ENCODE measurements at regions of chr7 and their contacts with region 1.

Region 1: GRCh38 chr7:37435156-37435855 is 13.4 kb downstream of the ELMO1 start:
- DNase-seq: no peak
- H3K4me3 Mint-ChIP-seq: no peak overlapping the region
- H3K27ac Mint-ChIP-seq: no peak overlapping the region
- H3K4me1 Mint-ChIP-seq: peaks cover 71% of the 10 kb centered on the region
- H3K27me3 Mint-ChIP-seq: no peaks in the 10 kb centered on the region

Region 2: GRCh38 chr7:37448636-37449361 is 13.5 kb after region 1 on chr7 and contains the start of gene ELMO1:
- CTCF ChIA-PET with region 1: interaction called, 13 read pairs
- POLR2A ChIA-PET with region 1: no interaction called
- DNase-seq: peak; percentile 86
- H3K4me3 Mint-ChIP-seq: peak within 1 kb of the TSS; percentile 91
- H3K27ac Mint-ChIP-seq: peak within 1 kb of the TSS; percentile 97
- H3K4me1 Mint-ChIP-seq: peaks cover 60% of the 10 kb centered on the region
- H3K27me3 Mint-ChIP-seq: peaks cover 2% of the 10 kb centered on the region
- total RNA-seq, gene ELMO1: 99.8 to 142 TPM

Region 3: GRCh38 chr7:37467002-37467401 is 31.7 kb after region 1 on chr7:
- CTCF ChIA-PET with region 1: no interaction called
- POLR2A ChIA-PET with region 1: no interaction called
- DNase-seq: no peak
- H3K4me3 Mint-ChIP-seq: no peak overlapping the region
- H3K27ac Mint-ChIP-seq: no peak overlapping the region
- H3K4me1 Mint-ChIP-seq: no peaks in the 10 kb centered on the region
- H3K27me3 Mint-ChIP-seq: peaks cover 6% of the 10 kb centered on the region

Measured in activated CD4-positive, alpha-beta T cell treated with anti-CD3 and anti-CD28 coated beads, Interleukin-2, amount 10 ng/mL, durations not matched to agents 7 days and 5 days (primary cell).